Astrocyte of the cerebellum (primary cell): ENCODE measurements at regions of chr21 and their contacts with region 1.

Region 1: DNA sequence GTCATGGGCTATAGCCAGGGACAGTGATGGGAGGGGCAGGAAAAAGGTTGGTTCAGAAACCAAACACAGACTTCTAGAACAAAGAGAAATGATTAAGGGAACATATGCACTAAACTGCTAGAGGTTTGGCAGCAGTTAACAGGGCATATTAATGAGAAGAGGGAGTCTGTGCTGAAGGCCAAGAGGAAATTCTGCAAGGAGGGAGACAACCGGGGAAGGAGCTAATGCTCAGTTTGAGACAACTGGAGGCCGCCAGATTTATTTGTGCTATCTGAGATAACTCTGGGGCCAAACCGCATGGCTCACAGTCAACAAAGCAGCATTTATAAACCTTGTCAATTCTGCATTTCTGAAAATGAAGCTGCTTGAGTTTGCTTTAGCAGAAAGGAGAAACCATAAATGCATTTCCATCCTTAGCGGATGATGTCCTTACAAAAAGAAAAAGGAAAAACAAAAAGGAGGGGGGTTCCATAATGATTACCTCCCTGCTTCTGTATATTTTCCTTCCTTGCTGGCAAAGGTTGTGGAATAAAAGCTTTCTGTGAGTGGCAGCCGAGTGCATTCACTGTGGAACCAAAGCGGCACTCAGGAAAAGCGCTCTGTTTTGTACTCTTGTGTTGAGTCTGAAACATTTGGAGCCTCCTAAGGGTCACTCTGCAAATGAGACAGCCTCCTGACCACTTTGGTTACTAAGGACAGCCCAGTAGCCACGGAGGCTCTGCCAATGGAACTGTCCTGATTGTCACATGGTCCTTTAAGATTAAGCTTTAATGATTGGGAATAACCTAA is 70.3 kb downstream of the SIM2 start:
- DNase-seq: peak; percentile 87
- H3K4me3 ChIP-seq: no peak overlapping the region
- CTCF ChIP-seq: no peak

Region 2: DNA sequence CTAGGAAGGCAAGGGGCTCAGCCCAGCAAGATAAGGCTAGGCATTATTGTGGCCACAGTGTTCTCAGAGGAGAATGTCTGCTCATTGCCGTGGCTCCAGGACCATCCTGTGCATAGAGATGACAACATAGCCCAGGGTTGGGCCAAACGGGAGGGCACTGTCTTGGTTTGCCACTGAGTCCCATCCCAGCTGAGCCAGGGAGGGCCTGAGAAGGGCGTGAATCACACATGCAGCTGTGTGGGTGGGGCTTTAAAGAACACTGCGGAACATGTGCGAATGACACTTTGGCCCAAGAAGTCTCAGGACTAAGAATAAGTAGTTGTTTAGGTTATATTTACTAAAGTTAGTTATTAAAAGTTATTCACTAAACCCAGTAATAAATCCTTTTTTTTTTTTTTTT is 365.5 kb before region 1 on chr21:
- in situ Hi-C with region 1: no loop called
- DNase-seq: no peak
- H3K4me3 ChIP-seq: no peak overlapping the region
- CTCF ChIP-seq: no peak

Region 3: GRCh38 chr21:36419996-36420395 is 349.2 kb before region 1 on chr21:
- in situ Hi-C with region 1: loop called (anchors 10 kb)
- DNase-seq: peak; percentile 83
- H3K4me3 ChIP-seq: no peak overlapping the region
- CTCF ChIP-seq: peak; percentile 81